ENCODE measurements at regions of chr15 and their contacts with region 1.

Region 1: DNA sequence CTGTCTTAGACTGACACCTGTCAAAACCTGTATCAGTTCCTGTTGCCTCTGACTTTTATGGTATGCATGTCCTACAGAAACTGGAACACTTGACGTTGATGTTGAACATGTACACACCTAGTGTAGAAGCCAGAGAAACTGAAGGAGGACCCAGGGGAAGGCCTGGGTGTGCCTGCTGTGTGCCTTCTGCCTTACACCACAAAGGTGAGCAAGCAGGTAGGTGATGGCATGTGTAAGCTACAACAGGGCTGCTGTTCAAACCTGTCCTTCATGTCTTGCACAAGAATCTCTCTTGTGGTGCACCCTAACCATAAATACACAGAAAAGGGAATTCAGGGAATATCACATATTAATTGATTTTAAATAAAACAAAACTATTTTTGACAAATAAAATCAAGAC is 13.6 kb upstream of the AQP9 start:
- DNase-seq: no peak
- ATAC-seq: no peak
- H3K4me3 Mint-ChIP-seq: no peak overlapping the region
- H3K27ac Mint-ChIP-seq: no peak overlapping the region
- H3K4me1 Mint-ChIP-seq: no peaks in the 10 kb centered on the region
- H3K27me3 Mint-ChIP-seq: peaks cover 10% of the 10 kb centered on the region

Region 2: DNA sequence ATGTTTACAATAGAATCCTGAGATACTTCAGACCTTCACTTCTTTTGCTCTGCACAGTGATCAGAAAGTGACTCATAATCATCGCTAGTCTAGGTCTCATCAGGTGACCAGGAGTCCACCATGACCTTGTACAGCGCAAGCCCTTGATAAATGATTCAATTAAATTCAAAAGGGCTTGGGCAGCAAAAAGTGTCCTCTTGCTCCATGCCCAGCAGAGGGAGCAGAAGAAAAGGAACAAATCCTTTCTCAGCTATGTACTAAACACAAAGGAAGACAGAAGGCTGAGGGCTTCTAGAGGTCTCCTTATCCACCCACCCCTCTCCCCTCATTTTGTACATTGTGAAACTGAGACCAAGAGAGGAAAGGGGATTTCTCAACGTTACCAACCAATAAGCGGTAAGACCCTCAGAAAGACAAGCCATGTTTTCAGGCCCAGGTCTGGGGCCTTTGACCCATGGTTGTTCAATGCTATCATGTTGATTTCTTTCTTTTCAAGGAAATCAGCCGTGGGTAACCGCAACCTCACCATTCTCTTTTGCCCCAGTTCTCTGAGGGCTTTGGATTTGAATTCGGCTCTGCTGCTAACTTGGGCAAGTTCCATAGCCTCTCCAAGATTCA is 88.4 kb after region 1 on chr15:
- POLR2A ChIA-PET with region 1: interaction called, 10 read pairs
- DNase-seq: no peak
- ATAC-seq: no peak
- H3K4me3 Mint-ChIP-seq: no peak overlapping the region
- H3K27ac Mint-ChIP-seq: no peak overlapping the region
- H3K4me1 Mint-ChIP-seq: peaks cover 4% of the 10 kb centered on the region
- H3K27me3 Mint-ChIP-seq: peaks cover 6% of the 10 kb centered on the region

Measured in activated naive CD8-positive, alpha-beta T cell treated with anti-CD3 and anti-CD28 coated beads, Interleukin-2, amount 10 ng/mL, durations not matched to agents 7 days and 5 days (primary cell).